ENCODE measurements at regions of chr2 and their contacts with region 1.

Region 1: GRCh38 chr2:218186355-218186766 is 19.6 kb upstream of the CXCR1 start:
- DNase-seq: peak; percentile 47
- H3K4me3 Mint-ChIP-seq: no peak overlapping the region
- H3K27ac Mint-ChIP-seq: no peak overlapping the region
- H3K4me1 Mint-ChIP-seq: peaks cover 10% of the 10 kb centered on the region
- H3K27me3 Mint-ChIP-seq: peaks cover 5% of the 10 kb centered on the region

Region 2: DNA sequence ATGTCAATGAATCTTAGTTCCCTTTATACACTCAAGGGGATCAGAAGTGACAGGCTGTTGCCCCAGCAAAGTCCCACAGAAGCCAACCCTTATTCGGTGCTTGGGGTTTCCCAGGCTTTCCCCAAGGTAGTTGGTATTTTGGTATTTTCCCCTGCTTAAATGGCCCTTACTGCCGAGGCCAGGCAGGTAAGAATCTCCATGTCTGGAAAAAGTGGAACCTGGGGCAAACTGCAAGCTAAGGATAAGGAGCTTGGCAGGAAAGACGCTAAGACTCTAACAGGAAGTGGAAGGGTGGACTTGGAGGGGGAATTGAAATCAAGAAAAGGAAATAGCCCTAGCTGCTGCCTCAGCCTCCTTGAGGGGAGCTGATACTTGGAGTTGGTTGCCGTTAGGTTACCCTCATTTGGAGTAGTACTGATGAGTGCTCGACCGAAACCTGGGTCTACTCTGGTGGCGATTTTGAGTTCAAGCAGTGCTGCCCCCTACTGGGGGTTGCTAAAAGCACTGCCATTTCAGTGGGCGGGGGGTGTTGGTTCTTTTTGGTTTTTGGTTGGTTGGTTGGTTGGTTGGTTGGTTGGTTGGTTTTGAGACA is 71.1 kb after region 1 on chr2:
- intact Hi-C with region 1: loop called (anchors 1 kb)
- DNase-seq: peak; percentile 46
- H3K4me3 Mint-ChIP-seq: no peak overlapping the region
- H3K27ac Mint-ChIP-seq: peak overlapping the region; percentile 83
- H3K4me1 Mint-ChIP-seq: peaks cover 31% of the 10 kb centered on the region
- H3K27me3 Mint-ChIP-seq: no peaks in the 10 kb centered on the region

Region 3: GRCh38 chr2:218360447-218360846 is 174.1 kb after region 1 on chr2:
- intact Hi-C with region 1: loop called (anchors 10 kb)
- DNase-seq: no peak
- H3K4me3 Mint-ChIP-seq: no peak overlapping the region
- H3K27ac Mint-ChIP-seq: no peak overlapping the region
- H3K4me1 Mint-ChIP-seq: no peaks in the 10 kb centered on the region
- H3K27me3 Mint-ChIP-seq: peaks cover 9% of the 10 kb centered on the region